Heart left ventricle (tissue), 16 donors: ENCODE measurements at regions of chr5 and their contacts with region 1.

Region 1: GRCh38 chr5:98880151-98880550 is 48.7 kb downstream of the CHD1 start:
- DNase-seq: no peak
- ATAC-seq: no peak
- H3K4me3 ChIP-seq: no peak overlapping the region
- H3K27ac ChIP-seq: no peak overlapping the region
- H3K4me1 ChIP-seq: no peaks in the 10 kb centered on the region
- H3K27me3 ChIP-seq: no peaks in the 10 kb centered on the region
- CTCF ChIP-seq: no peak
- POLR2A ChIP-seq: no peak

Region 2: DNA sequence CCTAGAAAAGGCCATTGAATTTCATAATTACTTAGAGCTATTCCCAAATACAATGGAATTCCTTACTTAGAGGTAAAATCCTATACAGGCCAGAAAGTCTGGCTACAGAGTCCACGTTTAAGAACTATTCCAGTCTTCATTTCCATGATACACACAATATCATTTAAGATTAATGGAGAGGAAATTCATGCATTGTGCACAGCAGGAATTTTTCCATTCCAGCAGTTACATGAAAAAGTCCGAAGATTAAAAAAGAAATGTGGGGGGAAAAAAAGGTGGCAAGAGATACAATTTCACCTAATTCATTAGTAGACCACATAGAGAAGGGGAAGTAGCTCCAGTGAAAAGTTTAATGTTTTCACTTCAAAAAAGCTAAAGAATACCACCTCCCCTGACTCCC is 14.5 kb before region 1 on chr5:
- intact Hi-C with region 1: loop called in 1 of 10 experiments (anchors 1 kb)
- DNase-seq: no peak
- ATAC-seq: no peak
- H3K4me3 ChIP-seq: no peak overlapping the region
- H3K27ac ChIP-seq: no peak overlapping the region
- H3K4me1 ChIP-seq: no peaks in the 10 kb centered on the region
- H3K27me3 ChIP-seq: no peaks in the 10 kb centered on the region
- CTCF ChIP-seq: no peak
- POLR2A ChIP-seq: no peak

Region 3: GRCh38 chr5:99032234-99033013 is 152.3 kb after region 1 on chr5:
- intact Hi-C with region 1: no loop called
- DNase-seq: peak in 4 of 5 donors; percentile 43 to 64 (median 50)
- ATAC-seq: peak; percentile 73 to 92 (median 84)
- H3K4me3 ChIP-seq: peak overlapping the region in 9 of 12 donors; percentile 26 to 54 (median 41)
- H3K27ac ChIP-seq: peak overlapping the region in 11 of 12 donors; percentile 26 to 83 (median 63)
- H3K4me1 ChIP-seq: peaks cover 0 to 62% (median 6%) of the 10 kb centered on the region in 12 donors
- H3K27me3 ChIP-seq: no peaks in the 10 kb centered on the region
- CTCF ChIP-seq: peak; percentile 59 to 95 (median 82)
- POLR2A ChIP-seq: no peak